Dorsolateral prefrontal cortex (tissue), 120 donors: ENCODE measurements at regions of chr7 and their contacts with region 1.

Region 1: GRCh38 chr7:111098011-111098925 is 7.3 kb downstream of the LRRN3 start:
- DNase-seq: peak in 5 of 10 donors; percentile 24 to 51 (median 42)
- H3K4me3 ChIP-seq: peak overlapping the region in 29 of 59 donors; percentile 0 to 66 (median 11)
- H3K27ac ChIP-seq: no peak overlapping the region
- H3K27me3 ChIP-seq: no peaks in the 10 kb centered on the region
- CTCF ChIP-seq: peak; percentile 16 to 85 (median 68)

Region 2: GRCh38 chr7:110373416-110373815 is 724.9 kb before region 1 on chr7:
- intact Hi-C with region 1: no loop called
- DNase-seq: no peak
- H3K4me3 ChIP-seq: no peak overlapping the region
- H3K27ac ChIP-seq: peak overlapping the region in 2 of 59 donors; percentile 8 to 42
- H3K27me3 ChIP-seq: no peaks in the 10 kb centered on the region
- CTCF ChIP-seq: no peak

Region 3: DNA sequence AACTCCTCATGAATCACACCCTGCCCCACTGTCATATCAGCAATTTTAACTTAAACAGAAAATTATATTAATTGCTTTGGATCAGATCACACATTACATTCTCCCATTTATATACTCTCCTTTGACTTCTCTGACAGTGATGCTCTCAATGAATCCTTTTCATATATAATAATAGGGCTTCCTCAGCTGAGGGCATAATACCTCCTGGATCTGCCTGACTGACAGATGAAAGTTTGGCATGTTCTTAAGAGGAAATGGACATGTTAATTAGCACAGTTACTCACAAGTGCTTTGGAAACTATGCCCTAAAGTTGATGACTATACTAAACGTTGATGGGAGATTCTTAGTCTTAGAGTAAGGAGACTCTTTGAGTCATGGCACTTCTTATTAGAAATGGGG is 485.6 kb before region 1 on chr7:
- intact Hi-C with region 1: no loop called
- DNase-seq: no peak
- H3K4me3 ChIP-seq: no peak overlapping the region
- H3K27ac ChIP-seq: no peak overlapping the region
- H3K27me3 ChIP-seq: no peaks in the 10 kb centered on the region
- CTCF ChIP-seq: no peak

Region 4: DNA sequence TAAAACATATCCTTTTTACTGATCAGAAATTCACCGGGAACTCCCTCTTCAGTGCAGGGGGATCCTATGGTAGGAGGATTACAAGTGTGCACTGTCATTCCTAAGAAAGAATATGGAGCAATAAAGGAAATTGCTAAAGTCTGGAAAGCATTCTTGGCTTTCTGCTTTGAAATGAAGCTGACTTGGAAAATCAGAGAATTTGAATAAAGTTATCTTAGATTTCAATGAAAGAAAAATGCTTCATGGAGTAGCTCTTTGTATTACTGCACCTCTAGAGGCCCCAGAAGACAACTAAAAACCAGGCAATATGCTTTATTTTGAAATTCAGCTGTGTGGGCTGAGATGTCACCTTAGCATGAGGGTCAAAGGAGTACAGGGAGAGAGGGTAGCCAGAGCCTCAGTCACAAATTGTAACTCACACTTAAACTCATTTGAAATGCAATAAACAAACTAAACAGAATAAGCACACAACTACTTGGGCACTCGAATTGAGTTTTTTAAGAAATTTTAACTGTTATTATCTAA is 361.6 kb after region 1 on chr7:
- intact Hi-C with region 1: no loop called
- DNase-seq: no peak
- H3K4me3 ChIP-seq: no peak overlapping the region
- H3K27ac ChIP-seq: no peak overlapping the region
- H3K27me3 ChIP-seq: no peaks in the 10 kb centered on the region
- CTCF ChIP-seq: no peak

Region 5: DNA sequence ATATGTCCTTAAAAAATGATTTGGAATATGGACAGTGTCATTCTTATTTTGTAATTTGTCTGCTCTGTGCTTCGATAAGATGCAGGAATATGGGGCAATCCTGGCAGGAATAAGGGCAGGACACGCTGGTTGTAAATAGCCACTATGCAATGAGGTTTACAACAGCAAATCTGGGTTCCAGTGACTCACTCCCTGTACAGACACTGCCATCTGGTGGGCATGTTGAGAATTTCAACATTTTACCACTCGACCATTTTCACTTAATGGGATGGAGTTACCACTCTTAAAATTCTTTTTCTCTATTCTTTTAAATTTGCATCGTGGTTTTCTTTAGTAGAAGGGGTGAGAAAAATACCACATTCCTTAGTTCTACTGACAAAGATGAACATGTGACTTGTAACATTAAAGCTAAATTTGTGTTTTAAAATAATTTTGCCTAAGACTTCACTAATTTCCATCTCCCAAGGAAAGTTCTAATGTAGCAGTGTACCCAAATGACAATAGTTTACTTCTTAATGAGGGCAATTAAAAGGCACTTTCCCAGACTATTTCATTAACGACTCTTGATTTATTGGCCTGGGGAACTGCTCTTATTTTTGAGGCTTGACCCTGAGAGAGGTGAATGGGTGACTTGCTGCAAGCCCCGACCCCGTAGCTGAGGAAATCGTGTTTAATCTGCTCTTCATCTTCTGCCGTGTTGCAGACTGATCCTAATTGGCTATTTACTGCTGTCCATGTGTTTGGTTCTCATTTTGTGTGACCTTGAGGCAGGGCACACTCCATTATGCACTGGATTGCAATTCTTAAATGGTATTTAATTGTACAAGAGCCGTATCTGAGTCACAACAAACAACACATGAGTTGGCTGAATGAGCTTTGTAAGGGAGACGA is 637.6 kb after region 1 on chr7:
- intact Hi-C with region 1: loop called (anchors 10 kb)
- DNase-seq: peak in 2 of 10 donors; percentile 58 to 61
- H3K4me3 ChIP-seq: no peak overlapping the region
- H3K27ac ChIP-seq: peak overlapping the region in 24 of 59 donors; percentile 2 to 65 (median 30)
- H3K27me3 ChIP-seq: no peaks in the 10 kb centered on the region
- CTCF ChIP-seq: peak; percentile 83 to 99 (median 92)

Region 6: GRCh38 chr7:111796671-111797070 is 698.4 kb after region 1 on chr7:
- intact Hi-C with region 1: no loop called
- DNase-seq: no peak
- H3K4me3 ChIP-seq: no peak overlapping the region
- H3K27ac ChIP-seq: no peak overlapping the region
- H3K27me3 ChIP-seq: no peaks in the 10 kb centered on the region
- CTCF ChIP-seq: no peak